ENCODE measurements at regions of chr9 and their contacts with region 1.

Region 1: DNA sequence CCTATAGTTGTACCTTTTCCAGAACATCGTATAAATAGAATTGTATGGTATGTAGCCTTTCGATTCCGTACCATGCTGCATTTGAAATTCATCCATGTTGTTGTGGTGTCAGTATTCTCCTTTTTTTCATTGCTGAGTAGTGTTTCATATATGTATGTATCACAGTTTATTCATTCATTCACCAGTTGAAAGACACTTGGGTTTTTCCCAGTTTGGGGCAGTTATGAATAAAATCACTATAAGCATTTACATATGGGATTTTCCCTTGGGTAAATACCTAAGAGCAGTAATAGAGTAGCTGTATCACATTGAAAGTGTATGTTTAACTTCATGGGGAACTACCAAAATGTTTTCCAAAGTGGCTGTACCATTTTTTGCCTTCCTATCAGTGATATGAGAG is 16.1 kb upstream of the FKTN start:
- DNase-seq: no peak
- ATAC-seq: peak; percentile 99
- H3K4me3 Mint-ChIP-seq: no peak overlapping the region
- H3K27ac Mint-ChIP-seq: no peak overlapping the region
- H3K4me1 Mint-ChIP-seq: peaks cover 10% of the 10 kb centered on the region
- H3K27me3 Mint-ChIP-seq: no peaks in the 10 kb centered on the region

Region 2: DNA sequence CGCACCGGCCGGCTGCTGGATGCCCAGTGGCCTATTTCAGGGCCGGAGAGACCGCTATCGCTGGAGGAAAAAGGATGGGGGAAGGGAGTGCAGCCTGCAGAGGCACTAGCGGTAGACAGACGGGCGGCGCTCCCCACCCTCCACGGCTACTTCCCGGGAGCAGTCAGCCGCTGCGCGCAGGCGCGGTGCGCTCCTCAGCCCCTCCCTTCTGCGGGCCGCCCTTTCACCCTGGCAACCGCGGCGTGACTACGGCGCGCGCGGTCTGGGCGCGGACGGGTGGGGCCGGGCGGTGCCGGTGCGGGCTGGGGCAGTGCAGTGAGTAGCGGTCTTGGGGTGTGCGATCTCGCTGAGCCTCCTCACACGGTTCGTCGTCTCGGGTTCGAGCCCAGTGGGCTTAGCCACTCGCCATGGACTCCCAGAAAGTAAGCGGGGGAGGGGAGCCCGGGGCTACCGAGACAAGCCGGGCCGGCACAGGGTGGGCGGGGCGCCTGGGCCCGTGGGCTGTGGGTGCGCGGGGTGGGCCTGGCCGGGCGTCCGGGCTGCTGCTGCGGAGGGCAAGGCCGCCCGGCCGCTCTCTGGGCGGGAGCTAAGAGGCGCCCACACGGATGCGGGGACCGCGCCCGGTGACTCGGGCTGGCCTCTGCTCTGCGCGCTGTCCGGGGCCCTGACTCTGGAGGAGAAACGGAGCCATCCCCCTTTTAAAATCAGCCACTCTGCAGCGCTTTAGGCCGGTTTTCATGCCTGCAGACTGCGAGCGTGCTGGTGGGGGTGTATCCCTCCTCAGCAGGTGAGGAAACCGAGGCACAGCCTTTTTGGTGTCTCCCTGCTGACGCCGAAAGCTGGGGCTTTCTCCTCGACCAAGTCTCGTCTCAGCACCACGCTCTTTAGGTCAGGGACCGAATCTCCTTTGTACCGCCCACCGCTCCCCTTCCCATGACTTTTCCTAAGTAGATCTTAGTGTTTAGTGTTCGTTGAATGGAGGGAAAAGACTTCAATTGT is 93.7 kb before region 1 on chr9 and contains the start of gene FSD1L:
- CTCF ChIA-PET with region 1: no interaction called
- POLR2A ChIA-PET with region 1: no interaction called
- intact Hi-C with region 1: loop called (anchors 5 kb)
- DNase-seq: peak; percentile 91
- ATAC-seq: peak; percentile 96
- H3K4me3 Mint-ChIP-seq: peak within 1 kb of the TSS; percentile 78
- H3K27ac Mint-ChIP-seq: peak within 1 kb of the TSS; percentile 44
- H3K4me1 Mint-ChIP-seq: peaks cover 9% of the 10 kb centered on the region
- H3K27me3 Mint-ChIP-seq: no peaks in the 10 kb centered on the region
- total RNA-seq, gene FSD1L: 2.4 to 3.0 TPM

Region 3: DNA sequence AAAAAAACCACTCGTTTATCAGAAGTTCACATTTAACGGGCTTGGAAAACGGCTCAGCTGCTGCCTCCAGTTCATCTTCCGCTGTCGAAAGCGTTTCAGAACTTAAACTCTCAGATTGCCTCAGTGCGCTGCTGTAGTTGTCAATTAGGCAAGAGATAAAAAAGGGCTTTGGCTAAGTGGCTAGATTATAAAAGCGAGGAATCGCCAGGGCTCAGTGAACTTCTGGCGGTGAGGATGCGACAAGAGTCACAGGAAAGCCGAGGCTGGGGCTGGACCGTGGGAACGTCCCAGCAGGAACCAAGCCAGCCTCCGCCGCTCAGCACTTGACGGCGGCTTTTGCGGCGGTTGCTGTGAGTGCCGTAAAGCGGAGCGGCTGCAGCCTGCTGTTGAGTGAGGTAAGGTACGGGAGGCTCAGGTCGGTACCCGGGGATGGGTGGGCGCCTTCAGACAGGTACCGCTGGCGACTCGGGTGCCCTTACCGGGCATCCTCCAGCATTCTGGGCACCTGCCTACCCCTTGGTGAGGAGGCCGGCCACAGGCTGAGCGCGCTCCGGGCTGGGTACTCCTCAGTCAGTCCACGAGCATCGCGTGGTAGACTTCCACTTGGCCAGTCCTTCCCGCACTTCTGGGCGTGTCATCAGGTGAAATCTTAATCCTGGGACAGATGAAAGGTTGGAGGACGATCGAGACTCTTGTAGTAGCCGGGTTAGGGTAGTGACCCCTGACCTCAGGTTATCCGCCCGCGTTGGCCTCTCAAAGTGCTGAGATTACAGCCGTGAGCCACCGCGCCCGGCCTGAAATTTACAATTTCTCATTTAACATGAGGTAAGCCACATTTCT is 16.2 kb after region 1 on chr9 and contains the start of gene FKTN:
- CTCF ChIA-PET with region 1: no interaction called
- POLR2A ChIA-PET with region 1: no interaction called
- intact Hi-C with region 1: loop called (anchors 1 to 2 kb)
- DNase-seq: peak; percentile 91
- ATAC-seq: peak; percentile 97
- H3K4me3 Mint-ChIP-seq: peak within 1 kb of the TSS; percentile 94
- H3K27ac Mint-ChIP-seq: peak within 1 kb of the TSS; percentile 85
- H3K4me1 Mint-ChIP-seq: peaks cover 18% of the 10 kb centered on the region
- H3K27me3 Mint-ChIP-seq: no peaks in the 10 kb centered on the region
- total RNA-seq, gene FKTN: 12.1 to 16.0 TPM

Region 4: GRCh38 chr9:105593145-105593544 is 51.3 kb after region 1 on chr9:
- CTCF ChIA-PET with region 1: no interaction called
- POLR2A ChIA-PET with region 1: no interaction called
- intact Hi-C with region 1: loop called in 1 of 2 experiments (anchors 10 kb)
- DNase-seq: no peak
- ATAC-seq: no peak
- H3K4me3 Mint-ChIP-seq: no peak overlapping the region
- H3K27ac Mint-ChIP-seq: no peak overlapping the region
- H3K4me1 Mint-ChIP-seq: peaks cover 2% of the 10 kb centered on the region
- H3K27me3 Mint-ChIP-seq: no peaks in the 10 kb centered on the region

Region 5: GRCh38 chr9:105633411-105633810 is 91.6 kb after region 1 on chr9:
- CTCF ChIA-PET with region 1: no interaction called
- POLR2A ChIA-PET with region 1: no interaction called
- intact Hi-C with region 1: no loop called
- DNase-seq: no peak
- ATAC-seq: no peak
- H3K4me3 Mint-ChIP-seq: no peak overlapping the region
- H3K27ac Mint-ChIP-seq: no peak overlapping the region
- H3K4me1 Mint-ChIP-seq: no peaks in the 10 kb centered on the region
- H3K27me3 Mint-ChIP-seq: no peaks in the 10 kb centered on the region

Region 6: GRCh38 chr9:106035806-106036205 is 494.0 kb after region 1 on chr9:
- CTCF ChIA-PET with region 1: no interaction called
- POLR2A ChIA-PET with region 1: no interaction called
- intact Hi-C with region 1: no loop called
- DNase-seq: no peak
- ATAC-seq: no peak
- H3K4me3 Mint-ChIP-seq: no peak overlapping the region
- H3K27ac Mint-ChIP-seq: no peak overlapping the region
- H3K4me1 Mint-ChIP-seq: no peaks in the 10 kb centered on the region
- H3K27me3 Mint-ChIP-seq: no peaks in the 10 kb centered on the region